Gastrocnemius medialis (tissue), 4 donors: ENCODE measurements at regions of chr19 and their contacts with region 1.

Region 1: DNA sequence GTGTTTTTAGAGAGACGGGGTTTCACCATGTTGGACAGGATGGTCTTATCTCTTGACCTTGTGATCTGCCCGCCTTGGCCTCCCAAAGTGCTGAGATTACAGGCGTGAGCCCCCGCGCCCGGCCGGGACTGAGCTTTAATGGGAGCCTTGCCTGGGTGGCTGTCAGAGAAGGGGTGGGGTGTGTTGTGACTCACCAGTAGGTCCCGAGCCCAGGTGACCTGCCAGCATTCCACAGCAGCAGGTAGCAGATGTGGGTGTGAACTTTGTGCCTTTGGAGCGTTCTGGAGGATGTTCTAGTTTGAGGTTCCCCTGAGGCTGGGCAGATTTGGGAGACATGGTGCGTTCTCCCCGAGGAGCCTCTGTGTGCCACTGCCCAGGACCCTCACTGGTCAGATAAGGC is 7.1 kb upstream of the EPN1 start:
- DNase-seq: no peak
- ATAC-seq: no peak
- H3K4me3 ChIP-seq: no peak overlapping the region
- H3K27ac ChIP-seq: no peak overlapping the region
- H3K4me1 ChIP-seq: no peaks in the 10 kb centered on the region
- H3K27me3 ChIP-seq: no peaks in the 10 kb centered on the region
- CTCF ChIP-seq: no peak
- POLR2A ChIP-seq: no peak

Region 2: GRCh38 chr19:55369671-55370304 is 298.2 kb before region 1 on chr19:
- in situ Hi-C with region 1: loop called in 1 of 4 experiments (anchors 10 kb)
- intact Hi-C with region 1: no loop called
- DNase-seq: no peak
- ATAC-seq: no peak
- H3K4me3 ChIP-seq: peak overlapping the region in 1 of 4 donors; percentile 11
- H3K27ac ChIP-seq: no peak overlapping the region
- H3K4me1 ChIP-seq: no peaks in the 10 kb centered on the region
- H3K27me3 ChIP-seq: peaks cover 56 to 72% (median 68%) of the 10 kb centered on the region in 3 donors
- CTCF ChIP-seq: no peak
- POLR2A ChIP-seq: no peak

Region 3: GRCh38 chr19:55632463-55632834 is 35.5 kb before region 1 on chr19:
- in situ Hi-C with region 1: no loop called
- intact Hi-C with region 1: no loop called
- DNase-seq: peak; percentile 82 to 91
- ATAC-seq: peak; percentile 59 to 70
- H3K4me3 ChIP-seq: no peak overlapping the region
- H3K27ac ChIP-seq: peak overlapping the region; percentile 90 to 100 (median 98)
- H3K4me1 ChIP-seq: peaks cover 24 to 27% of the 10 kb centered on the region in 2 donors
- H3K27me3 ChIP-seq: no peaks in the 10 kb centered on the region
- CTCF ChIP-seq: peak; percentile 86 to 95 (median 91)
- POLR2A ChIP-seq: no peak